PC-3 (cell line): ENCODE measurements at regions of chr14 and their contacts with region 1.

Region 1: DNA sequence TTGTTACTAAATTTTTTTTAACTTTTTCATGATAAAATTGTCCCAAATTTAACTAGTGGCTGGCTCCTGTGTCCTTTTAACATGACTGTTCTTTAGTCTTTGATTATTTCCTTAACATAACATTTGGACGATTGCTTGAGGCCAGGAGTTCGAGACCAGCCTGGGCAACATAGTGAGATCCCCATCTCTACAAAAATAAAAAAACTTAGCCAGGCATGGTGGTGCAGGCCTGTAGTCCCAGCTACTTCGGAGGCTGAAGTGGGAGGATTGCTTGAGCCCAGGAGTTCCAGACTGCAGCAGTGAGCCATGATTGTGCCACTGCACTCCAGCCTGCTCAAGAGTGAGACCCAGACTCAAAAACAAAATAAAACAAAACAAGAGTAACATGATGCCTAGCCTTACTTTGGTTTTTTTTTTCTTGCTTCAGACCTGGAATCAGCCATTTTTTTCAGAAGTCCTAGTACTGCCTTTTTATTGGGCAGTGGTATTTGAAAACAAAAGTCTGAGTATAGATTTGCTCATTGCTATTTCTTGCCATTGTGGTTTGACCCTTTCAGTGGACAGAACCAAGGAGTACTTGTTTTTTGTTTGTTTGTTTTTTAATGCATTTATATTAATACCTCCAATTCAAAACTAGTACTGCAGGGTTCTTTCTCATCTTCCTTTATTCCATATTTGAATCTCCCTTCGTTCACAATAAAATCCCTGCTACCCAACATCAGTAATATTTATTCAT is 4.8 kb downstream of the TOGARAM1 start:
- DNase-seq: peak; percentile 34
- ATAC-seq: no peak
- H3K4me3 ChIP-seq: peak overlapping the region; percentile 61
- H3K27ac ChIP-seq: no peak overlapping the region
- H3K4me1 ChIP-seq: peaks cover 23% of the 10 kb centered on the region; the same call in 1 of the 2 replicates
- H3K27me3 ChIP-seq: no peaks in the 10 kb centered on the region
- CTCF ChIP-seq: no peak

Region 2: DNA sequence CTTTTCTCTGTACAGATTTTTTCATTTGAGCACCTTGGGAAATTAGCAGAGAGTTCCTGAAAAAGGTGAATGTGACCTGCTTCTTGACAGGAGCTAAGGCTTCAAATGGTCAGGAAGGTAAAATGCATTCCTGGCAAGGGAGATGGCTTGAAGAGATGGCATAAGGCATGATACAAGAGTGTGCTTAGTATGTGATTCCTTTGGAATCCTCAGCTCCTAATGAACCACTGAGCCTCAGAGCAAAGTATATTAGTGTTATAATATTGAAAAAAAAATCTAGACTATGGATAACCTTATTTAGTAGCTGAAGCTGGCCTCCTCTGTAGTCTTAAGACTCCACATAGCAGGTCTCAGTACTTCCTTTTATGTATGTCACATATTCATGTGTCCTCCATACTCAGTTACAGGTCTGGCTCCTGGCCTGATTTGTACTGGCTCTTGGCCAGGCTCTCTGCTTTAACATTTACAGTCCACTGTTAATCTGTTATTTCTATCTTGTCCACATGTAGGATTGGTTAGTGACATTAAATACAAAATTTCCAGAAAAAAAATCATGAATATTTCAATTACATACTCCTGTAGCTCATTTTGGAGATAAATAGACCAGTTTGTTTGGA is 13.1 kb after region 1 on chr14:
- CTCF ChIA-PET with region 1: no interaction called
- POLR2A ChIA-PET with region 1: interaction called, 11 read pairs
- intact Hi-C with region 1: loop called (anchors 2 kb)
- DNase-seq: no peak
- ATAC-seq: peak; percentile 43; the same call in 1 of the 2 replicates
- H3K4me3 ChIP-seq: no peak overlapping the region
- H3K27ac ChIP-seq: no peak overlapping the region
- H3K4me1 ChIP-seq: no peaks in the 10 kb centered on the region
- H3K27me3 ChIP-seq: no peaks in the 10 kb centered on the region
- CTCF ChIP-seq: no peak